Prostate gland (tissue), 2 donors: ENCODE measurements at regions of chr6 and their contacts with region 1.

Region 1: GRCh38 chr6:111478749-111479148 is 4.3 kb downstream of the REV3L start:
- DNase-seq: no peak
- H3K4me3 ChIP-seq: no peak overlapping the region
- H3K27ac ChIP-seq: peak overlapping the region; percentile 0 to 32
- H3K4me1 ChIP-seq: no peaks in the 10 kb centered on the region
- H3K27me3 ChIP-seq: no peaks in the 10 kb centered on the region
- CTCF ChIP-seq: peak in 3 of 4 experiments; percentile 34 to 61 (median 51)
- POLR2A ChIP-seq: no peak

Region 2: GRCh38 chr6:111361648-111362047 is 117.1 kb before region 1 on chr6:
- intact Hi-C with region 1: loop called (anchors 5 kb)
- DNase-seq: no peak
- H3K4me3 ChIP-seq: no peak overlapping the region
- H3K27ac ChIP-seq: no peak overlapping the region
- H3K4me1 ChIP-seq: no peaks in the 10 kb centered on the region
- H3K27me3 ChIP-seq: no peaks in the 10 kb centered on the region
- CTCF ChIP-seq: peak in 3 of 4 experiments; percentile 28 to 48 (median 45)
- POLR2A ChIP-seq: no peak

Region 3: DNA sequence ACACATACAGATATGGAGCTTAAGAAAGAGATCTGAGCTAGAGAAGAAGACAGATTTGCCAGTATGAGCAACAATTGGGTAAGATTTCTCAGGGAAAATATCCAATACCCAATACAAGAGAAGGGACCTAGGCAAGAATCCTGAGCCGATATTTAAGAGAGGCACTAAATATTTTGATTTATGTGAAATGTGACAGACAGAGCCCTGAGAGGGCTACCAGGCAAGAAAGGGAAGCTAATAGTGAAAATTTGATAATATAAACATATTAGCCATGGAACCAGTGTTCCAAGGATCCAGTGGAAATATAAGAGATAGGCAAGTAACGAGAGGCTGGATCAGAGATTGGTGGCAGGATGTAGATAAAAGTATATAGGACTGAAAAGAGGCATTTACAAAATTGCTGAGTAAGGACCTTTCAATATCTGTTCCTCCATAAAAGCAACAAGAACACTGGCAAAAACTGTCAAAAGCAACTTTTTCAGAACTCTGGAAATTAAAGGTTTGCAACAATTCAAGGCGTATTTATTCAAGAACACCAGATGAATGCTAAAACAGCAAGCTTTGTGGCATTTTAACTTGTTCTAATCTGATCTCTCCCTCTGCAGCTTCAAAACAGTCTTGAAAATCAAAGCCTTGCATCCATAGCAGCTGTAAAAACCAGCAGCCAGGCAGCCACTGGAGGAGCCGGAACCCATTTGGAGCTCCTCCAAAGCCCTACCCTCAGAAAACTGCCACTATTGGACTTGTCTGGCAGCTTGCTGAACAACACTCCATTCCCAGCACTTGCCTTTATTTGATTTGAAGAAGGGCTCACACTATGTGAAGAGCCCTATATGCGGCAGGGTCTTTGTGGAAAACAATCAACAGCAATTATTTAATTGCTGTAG is 54.5 kb before region 1 on chr6:
- intact Hi-C with region 1: loop called (anchors 5 kb)
- DNase-seq: peak; percentile 72
- H3K4me3 ChIP-seq: no peak overlapping the region
- H3K27ac ChIP-seq: peak overlapping the region in 1 of 2 donors; percentile 2
- H3K4me1 ChIP-seq: no peaks in the 10 kb centered on the region
- H3K27me3 ChIP-seq: no peaks in the 10 kb centered on the region
- CTCF ChIP-seq: no peak
- POLR2A ChIP-seq: no peak